ENCODE measurements at regions of chr4 and their contacts with region 1.

Region 1: GRCh38 chr4:85147439-85148076 is 181.1 kb upstream of the WDFY3 start:
- DNase-seq: peak; percentile 28
- H3K4me3 Mint-ChIP-seq: no peak overlapping the region
- H3K27ac Mint-ChIP-seq: no peak overlapping the region
- H3K4me1 Mint-ChIP-seq: no peaks in the 10 kb centered on the region
- H3K27me3 Mint-ChIP-seq: peaks cover 8% of the 10 kb centered on the region

Region 2: DNA sequence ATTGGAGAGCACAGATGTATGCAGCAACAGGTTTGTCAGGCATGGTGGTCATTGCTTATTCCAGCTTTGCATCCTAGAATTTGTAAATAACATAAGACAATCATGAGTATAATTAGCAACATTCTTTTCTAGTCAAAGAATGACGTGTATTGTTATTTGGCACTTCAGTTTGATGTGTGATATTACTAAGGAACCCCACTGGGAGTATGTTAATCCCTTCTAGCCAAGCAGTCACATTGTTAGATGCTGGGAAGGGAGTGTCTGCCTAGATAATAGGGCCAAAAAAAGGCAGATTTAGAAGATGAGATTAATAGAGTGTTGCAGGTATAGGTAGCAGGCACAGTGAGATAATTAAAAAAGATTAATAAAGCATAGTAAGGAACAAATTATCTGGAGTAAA is 21.9 kb before region 1 on chr4:
- CTCF ChIA-PET with region 1: no interaction called
- intact Hi-C with region 1: no loop called
- DNase-seq: no peak
- H3K4me3 Mint-ChIP-seq: no peak overlapping the region
- H3K27ac Mint-ChIP-seq: no peak overlapping the region
- H3K4me1 Mint-ChIP-seq: no peaks in the 10 kb centered on the region
- H3K27me3 Mint-ChIP-seq: no peaks in the 10 kb centered on the region

Region 3: DNA sequence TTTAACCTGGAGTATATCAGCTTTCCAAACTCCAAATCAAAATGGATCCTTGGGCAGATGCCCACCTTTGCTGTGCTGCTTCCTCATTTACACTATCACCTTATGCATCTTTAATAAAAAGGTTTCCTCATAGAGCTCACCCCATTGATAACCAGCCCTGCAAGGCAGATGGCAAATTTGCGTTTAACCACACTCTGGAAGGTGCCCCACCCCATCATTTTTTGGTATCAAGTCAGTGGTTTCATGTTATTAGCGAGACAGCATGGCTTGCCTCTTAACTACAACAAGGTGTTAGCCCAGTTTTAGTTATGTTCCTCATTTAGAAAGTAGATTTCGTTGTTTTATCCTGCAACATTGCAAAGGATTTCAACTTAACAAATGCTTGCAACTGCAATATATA is 33.0 kb after region 1 on chr4:
- CTCF ChIA-PET with region 1: no interaction called
- intact Hi-C with region 1: no loop called
- DNase-seq: no peak
- H3K4me3 Mint-ChIP-seq: no peak overlapping the region
- H3K27ac Mint-ChIP-seq: no peak overlapping the region
- H3K4me1 Mint-ChIP-seq: no peaks in the 10 kb centered on the region
- H3K27me3 Mint-ChIP-seq: no peaks in the 10 kb centered on the region

Region 4: GRCh38 chr4:85370430-85371032 is 223.0 kb after region 1 on chr4:
- CTCF ChIA-PET with region 1: no interaction called
- intact Hi-C with region 1: loop called (anchors 1 kb)
- DNase-seq: peak; percentile 12
- H3K4me3 Mint-ChIP-seq: no peak overlapping the region
- H3K27ac Mint-ChIP-seq: no peak overlapping the region
- H3K4me1 Mint-ChIP-seq: no peaks in the 10 kb centered on the region
- H3K27me3 Mint-ChIP-seq: no peaks in the 10 kb centered on the region

Region 5: GRCh38 chr4:85747882-85748491 is 600.4 kb after region 1 on chr4:
- CTCF ChIA-PET with region 1: interaction called, 3 read pairs
- intact Hi-C with region 1: loop called (anchors 1 kb)
- DNase-seq: peak; percentile 25
- H3K4me3 Mint-ChIP-seq: no peak overlapping the region
- H3K27ac Mint-ChIP-seq: no peak overlapping the region
- H3K4me1 Mint-ChIP-seq: no peaks in the 10 kb centered on the region
- H3K27me3 Mint-ChIP-seq: peaks cover 3% of the 10 kb centered on the region

Region 6: DNA sequence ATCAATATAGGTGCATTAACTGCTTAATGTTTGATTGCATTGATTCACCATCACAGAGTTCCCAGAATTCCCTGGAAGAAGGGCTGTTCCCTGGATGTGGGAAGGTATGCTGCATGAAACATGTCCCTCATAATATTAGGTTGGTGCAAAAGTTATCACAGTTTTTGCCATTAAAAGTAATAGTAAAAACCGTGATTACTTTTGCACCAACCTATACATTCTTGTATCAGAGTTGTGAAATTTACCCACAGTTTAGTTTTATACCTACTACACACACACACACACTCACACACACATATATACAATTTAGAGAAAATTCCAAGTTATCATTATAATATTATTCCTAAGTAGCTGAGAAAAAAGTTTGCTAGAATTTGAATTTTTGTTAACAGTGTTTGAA is 648.4 kb after region 1 on chr4:
- CTCF ChIA-PET with region 1: no interaction called
- intact Hi-C with region 1: loop called (anchors 2 kb)
- DNase-seq: no peak
- H3K4me3 Mint-ChIP-seq: no peak overlapping the region
- H3K27ac Mint-ChIP-seq: no peak overlapping the region
- H3K4me1 Mint-ChIP-seq: no peaks in the 10 kb centered on the region
- H3K27me3 Mint-ChIP-seq: no peaks in the 10 kb centered on the region

Region 7: DNA sequence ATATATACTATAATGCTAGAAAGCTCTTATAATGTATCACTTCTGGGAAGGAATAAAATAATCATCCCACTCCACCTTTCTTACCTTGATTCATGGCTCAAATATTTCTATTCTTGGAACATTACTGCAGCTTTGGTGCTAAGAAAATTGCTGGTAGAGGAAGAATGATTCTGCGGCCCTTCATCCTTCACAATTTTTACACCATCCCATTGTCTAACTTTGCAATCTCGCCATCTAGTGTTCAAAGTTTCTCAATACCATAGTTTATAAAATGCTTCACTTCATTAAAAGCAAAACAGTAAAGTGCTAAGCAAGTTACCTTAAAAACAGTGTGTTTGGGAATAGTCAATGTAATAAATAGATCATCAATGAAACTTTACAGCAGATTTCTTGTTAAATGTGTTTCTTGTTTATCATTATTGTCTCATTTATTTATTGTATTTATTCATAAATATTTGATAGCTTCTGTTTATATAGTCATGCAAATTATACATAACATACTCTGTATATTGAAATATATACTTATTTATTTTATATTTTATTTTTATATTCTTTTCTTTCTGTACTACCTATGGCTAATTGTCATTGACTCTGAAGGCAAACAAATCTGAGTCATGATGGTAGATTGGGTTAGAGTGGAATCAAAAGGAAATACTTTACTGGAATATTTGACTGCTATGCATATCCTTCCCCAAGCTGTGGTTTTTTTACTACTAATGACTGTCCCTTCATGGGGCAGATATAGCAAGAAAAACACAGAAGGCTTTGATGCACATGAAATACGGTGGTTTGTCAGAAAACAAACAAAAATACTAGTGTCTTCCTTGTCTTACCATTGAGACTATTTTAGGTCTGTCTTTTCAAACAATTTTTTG is 821.6 kb after region 1 on chr4:
- CTCF ChIA-PET with region 1: no interaction called
- intact Hi-C with region 1: loop called (anchors 1 kb)
- DNase-seq: no peak
- H3K4me3 Mint-ChIP-seq: no peak overlapping the region
- H3K27ac Mint-ChIP-seq: no peak overlapping the region
- H3K4me1 Mint-ChIP-seq: no peaks in the 10 kb centered on the region
- H3K27me3 Mint-ChIP-seq: no peaks in the 10 kb centered on the region

Region 8: DNA sequence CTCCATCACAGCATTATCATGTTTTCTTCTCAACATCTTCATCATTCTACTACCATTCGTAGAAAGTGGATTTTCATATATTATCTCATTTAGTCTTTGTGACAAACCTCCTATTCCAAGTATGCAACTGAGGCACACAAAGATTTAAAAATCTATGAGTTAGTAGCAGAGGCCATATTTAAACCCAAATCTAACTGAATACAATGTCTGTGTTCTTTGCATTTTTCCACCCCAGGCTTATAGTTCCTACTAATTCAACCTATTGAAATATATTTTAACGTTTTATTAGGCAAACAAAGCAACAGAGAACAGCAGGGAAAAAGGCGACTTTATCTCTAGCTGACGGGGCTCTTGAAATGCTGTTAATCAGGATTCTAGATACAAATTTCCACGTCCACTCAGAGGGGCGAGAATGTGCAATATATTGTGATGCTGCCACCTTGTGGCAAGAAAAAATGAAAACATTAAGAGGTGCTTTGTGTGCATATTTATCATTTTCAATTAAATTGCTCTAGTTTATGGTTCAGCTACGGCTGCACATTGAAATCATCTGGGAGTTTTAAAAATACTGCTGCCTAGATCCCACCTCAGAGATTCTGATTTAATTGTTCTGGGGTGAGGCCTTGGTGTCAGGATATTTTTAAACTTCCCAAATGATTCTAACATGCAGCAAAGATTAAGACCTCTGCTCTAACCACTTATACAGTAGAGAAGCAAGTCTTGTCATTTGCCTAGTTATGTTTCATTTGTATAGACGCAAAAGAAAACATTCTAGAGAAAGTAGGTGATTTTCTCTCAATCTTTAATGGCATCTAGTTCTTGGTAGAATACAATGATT is 896.4 kb after region 1 on chr4:
- CTCF ChIA-PET with region 1: no interaction called
- intact Hi-C with region 1: loop called (anchors 1 kb)
- DNase-seq: peak; percentile 9
- H3K4me3 Mint-ChIP-seq: no peak overlapping the region
- H3K27ac Mint-ChIP-seq: no peak overlapping the region
- H3K4me1 Mint-ChIP-seq: no peaks in the 10 kb centered on the region
- H3K27me3 Mint-ChIP-seq: no peaks in the 10 kb centered on the region

Region 9: GRCh38 chr4:86895692-86896488 is 1748.3 kb after region 1 on chr4:
- CTCF ChIA-PET with region 1: no interaction called
- intact Hi-C with region 1: loop called (anchors 10 kb)
- DNase-seq: no peak
- H3K4me3 Mint-ChIP-seq: no peak overlapping the region
- H3K27ac Mint-ChIP-seq: no peak overlapping the region
- H3K4me1 Mint-ChIP-seq: peaks cover 5% of the 10 kb centered on the region
- H3K27me3 Mint-ChIP-seq: peaks cover 17% of the 10 kb centered on the region

Measured in activated naive CD4-positive, alpha-beta T cell treated with anti-CD3 and anti-CD28 coated beads for 36 hours (primary cell).